H1 (cell line): ENCODE measurements at regions of chr2 and their contacts with region 1.

Region 1: GRCh38 chr2:17590342-17590911 is 49.9 kb downstream of the VSNL1 start:
- DNase-seq: no peak
- H3K4me3 ChIP-seq: no peak overlapping the region
- H3K27ac ChIP-seq: no peak overlapping the region; the same call in 1 of the 2 replicates
- H3K4me1 ChIP-seq: peaks cover 0 to 17% (median 9%) of the 10 kb centered on the region in 4 experiments; a peak in 5 of 7 replicates
- H3K27me3 ChIP-seq: no peaks in the 10 kb centered on the region
- CTCF ChIP-seq: no peak
- EP300 ChIP-seq: no peak
- POLR2A ChIP-seq: no peak
- RAD21 ChIP-seq: no peak

Region 2: DNA sequence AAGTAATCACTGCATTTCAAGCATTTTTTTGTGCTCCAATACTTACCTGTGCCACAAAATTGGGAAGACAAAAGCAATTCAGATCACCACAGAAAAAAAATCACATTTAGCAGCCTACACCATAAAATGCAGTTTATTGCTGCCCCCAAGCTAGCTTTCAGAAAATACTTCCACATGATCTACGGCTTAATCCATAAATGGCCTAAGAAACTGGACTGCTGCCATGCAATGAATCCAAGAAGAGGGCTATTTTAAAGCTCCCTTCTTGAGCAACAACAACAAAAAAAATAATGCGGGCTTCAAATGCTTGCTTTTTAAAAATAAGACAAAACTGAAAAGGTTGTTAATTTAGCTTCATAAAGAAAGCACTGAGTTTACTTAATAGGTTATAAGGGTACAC is 344.5 kb before region 1 on chr2:
- CTCF ChIA-PET with region 1: no interaction called
- POLR2A ChIA-PET with region 1: no interaction called
- DNase-seq: no peak
- H3K4me3 ChIP-seq: no peak overlapping the region
- H3K27ac ChIP-seq: no peak overlapping the region
- H3K4me1 ChIP-seq: peaks cover 0 to 4% (median 0%) of the 10 kb centered on the region in 4 experiments; a peak in 2 of 7 replicates
- H3K27me3 ChIP-seq: no peaks in the 10 kb centered on the region
- CTCF ChIP-seq: no peak
- EP300 ChIP-seq: no peak
- POLR2A ChIP-seq: no peak
- RAD21 ChIP-seq: no peak

Region 3: DNA sequence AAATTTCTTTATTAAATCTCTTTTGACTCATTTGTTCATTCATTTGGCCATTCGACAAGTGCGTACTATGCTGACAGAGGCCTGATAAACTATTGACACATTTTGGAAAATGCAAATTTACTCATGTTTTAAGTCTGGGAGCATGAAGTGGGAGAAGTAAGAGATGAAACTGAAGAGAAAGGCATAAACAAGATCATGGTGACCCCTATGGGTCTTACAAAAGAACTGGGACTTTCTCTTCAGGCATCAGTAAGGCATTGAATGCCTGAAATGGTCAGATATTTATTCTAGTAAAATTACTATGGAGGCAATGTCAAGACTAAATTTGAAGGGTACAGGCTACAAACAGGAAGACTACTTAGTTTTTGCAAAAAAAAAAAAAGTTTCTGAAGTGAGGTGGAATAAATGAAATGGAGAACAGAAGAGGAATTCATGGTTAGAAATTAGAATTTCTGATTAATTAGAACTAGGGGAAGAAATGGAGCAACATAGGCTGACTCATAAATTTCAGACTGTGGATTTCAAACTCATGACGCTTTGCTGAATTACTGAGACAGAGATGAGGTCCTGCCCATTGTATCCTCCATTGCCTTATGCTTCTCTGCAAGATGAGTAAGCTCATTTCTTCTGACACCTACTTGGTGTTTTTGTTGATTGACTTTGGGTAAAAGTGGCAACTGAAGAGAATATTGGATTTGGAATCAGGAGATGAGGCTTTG is 17.2 kb before region 1 on chr2:
- CTCF ChIA-PET with region 1: interaction called, 13 read pairs
- POLR2A ChIA-PET with region 1: interaction called, 6 read pairs
- DNase-seq: no peak
- H3K4me3 ChIP-seq: no peak overlapping the region
- H3K27ac ChIP-seq: no peak overlapping the region
- H3K4me1 ChIP-seq: no peaks in the 10 kb centered on the region; a peak in 2 of 7 replicates
- H3K27me3 ChIP-seq: no peaks in the 10 kb centered on the region
- CTCF ChIP-seq: peak in 2 of 3 experiments; percentile 29 to 51; a peak in 2 of 4 replicates
- EP300 ChIP-seq: no peak
- POLR2A ChIP-seq: no peak
- RAD21 ChIP-seq: peak; percentile 69 to 72